ENCODE measurements at regions of chr7 and their contacts with region 1.

Region 1: GRCh38 chr7:155752756-155753445 is 59.4 kb downstream of the SHH start:
- DNase-seq: no peak
- H3K4me3 ChIP-seq: no peak overlapping the region
- H3K27ac ChIP-seq: no peak overlapping the region
- H3K4me1 ChIP-seq: no peaks in the 10 kb centered on the region
- H3K27me3 ChIP-seq: no peaks in the 10 kb centered on the region
- CTCF ChIP-seq: no peak
- POLR2A ChIP-seq: no peak

Region 2: DNA sequence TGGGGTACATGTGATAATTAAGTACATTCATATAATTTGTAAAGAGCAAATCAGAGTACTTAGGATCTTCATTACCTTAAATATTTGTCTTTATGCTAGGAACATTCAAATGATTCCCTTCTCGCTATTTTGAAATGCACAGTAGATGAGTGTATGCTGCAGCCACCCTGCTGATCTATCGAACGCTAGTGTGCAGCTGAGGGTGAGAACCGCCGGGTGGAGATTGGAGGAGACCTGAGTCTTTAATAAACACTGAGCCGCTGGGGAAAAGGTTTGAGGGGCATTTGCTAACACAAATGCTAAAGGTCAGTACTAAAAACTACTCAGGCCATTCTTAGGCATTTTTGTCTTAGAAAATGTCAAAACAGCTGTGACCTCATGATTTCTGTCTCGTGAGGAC is 1552.7 kb before region 1 on chr7:
- intact Hi-C with region 1: no loop called
- DNase-seq: no peak
- H3K4me3 ChIP-seq: no peak overlapping the region
- H3K27ac ChIP-seq: no peak overlapping the region
- H3K4me1 ChIP-seq: no peaks in the 10 kb centered on the region
- H3K27me3 ChIP-seq: no peaks in the 10 kb centered on the region
- CTCF ChIP-seq: no peak
- POLR2A ChIP-seq: no peak

Region 3: DNA sequence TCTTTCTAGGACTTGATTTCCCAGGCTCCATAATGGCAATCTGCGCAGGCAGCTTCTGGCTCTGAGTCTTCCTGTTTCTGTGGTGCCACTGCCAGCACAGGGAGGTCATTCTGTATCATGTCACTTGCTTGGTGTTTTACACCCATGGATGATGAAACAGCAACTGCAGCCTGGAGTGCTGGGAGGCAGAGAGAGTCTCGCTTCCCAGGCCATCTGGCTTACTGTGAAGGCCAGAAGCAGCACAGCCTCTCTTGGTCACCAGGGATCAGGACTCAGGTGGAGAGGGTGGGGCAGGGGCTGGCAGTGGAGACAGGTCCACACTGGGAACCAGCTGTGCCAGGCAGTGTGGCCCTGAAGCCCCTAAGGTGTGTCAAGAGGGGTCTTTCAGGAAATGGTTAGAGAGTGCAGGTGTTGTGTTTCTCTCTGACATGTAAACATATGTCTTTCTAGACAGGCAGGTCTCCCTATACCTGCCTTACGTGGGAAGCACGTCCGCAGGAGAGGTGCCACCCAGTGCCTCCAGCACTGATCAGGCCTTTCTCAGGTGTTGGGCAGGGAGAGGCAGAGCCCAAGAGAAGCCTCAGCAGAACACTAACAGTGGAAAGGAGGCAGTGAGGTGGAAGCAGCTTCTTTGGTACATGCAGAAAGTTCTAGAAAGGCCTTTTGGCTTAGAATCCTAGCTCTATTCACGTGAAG is 383.9 kb before region 1 on chr7:
- intact Hi-C with region 1: loop called (anchors 5 kb)
- DNase-seq: peak in 1 of 2 donors; percentile 38
- H3K4me3 ChIP-seq: no peak overlapping the region
- H3K27ac ChIP-seq: no peak overlapping the region
- H3K4me1 ChIP-seq: peaks cover 4 to 13% of the 10 kb centered on the region in 2 donors
- H3K27me3 ChIP-seq: peaks cover 15 to 47% of the 10 kb centered on the region in 2 donors
- CTCF ChIP-seq: no peak
- POLR2A ChIP-seq: no peak

Region 4: DNA sequence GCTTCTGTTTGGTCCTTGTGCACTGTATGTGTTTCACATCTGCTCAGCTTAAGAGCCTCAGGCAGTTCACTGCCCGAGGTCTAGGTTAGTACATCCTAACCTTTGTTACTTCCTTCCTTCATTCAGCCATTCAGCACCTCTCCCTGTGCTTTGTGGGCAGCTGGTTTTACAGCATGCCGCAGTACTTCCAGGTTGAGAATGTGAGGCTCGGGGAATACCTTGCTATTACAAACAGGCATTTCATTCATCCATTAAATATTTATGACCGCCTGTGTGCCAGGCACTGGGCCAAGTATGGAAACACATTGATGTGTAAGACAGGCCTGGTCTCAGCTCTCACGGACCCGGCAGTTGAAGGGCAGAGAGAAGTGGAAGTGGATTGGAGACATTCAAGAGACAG is 23.1 kb before region 1 on chr7:
- intact Hi-C with region 1: no loop called
- DNase-seq: peak in 1 of 2 donors; percentile 27
- H3K4me3 ChIP-seq: no peak overlapping the region
- H3K27ac ChIP-seq: no peak overlapping the region
- H3K4me1 ChIP-seq: no peaks in the 10 kb centered on the region
- H3K27me3 ChIP-seq: no peaks in the 10 kb centered on the region
- CTCF ChIP-seq: no peak
- POLR2A ChIP-seq: no peak

Region 5: DNA sequence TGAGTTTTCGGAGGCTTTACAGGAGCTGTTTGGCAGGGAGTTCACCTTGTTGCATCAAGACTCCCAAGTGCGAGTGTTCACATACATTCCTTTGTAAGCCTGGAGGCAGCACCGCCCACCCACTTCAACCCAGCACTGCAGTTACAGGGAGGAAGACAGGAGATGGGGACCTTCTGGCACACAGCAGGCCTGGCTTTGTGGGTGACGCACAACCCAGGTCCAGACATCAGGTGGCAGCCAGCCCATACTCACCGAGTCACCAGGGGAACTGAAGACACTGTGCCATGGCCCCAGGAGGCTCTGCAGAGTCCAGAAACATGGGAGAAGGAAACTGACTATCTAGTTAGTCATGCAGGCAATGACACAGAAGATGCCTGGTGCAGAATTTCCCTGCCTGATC is 581.7 kb after region 1 on chr7:
- intact Hi-C with region 1: no loop called
- DNase-seq: peak in 1 of 2 donors; percentile 51
- H3K4me3 ChIP-seq: no peak overlapping the region
- H3K27ac ChIP-seq: no peak overlapping the region
- H3K4me1 ChIP-seq: no peaks in the 10 kb centered on the region
- H3K27me3 ChIP-seq: no peaks in the 10 kb centered on the region
- CTCF ChIP-seq: no peak
- POLR2A ChIP-seq: no peak